Activated CD4-positive, alpha-beta memory T cell treated with anti-CD3 and anti-CD28 coated beads for 36 hours (primary cell): ENCODE measurements at regions of chrX and their contacts with region 1.

Region 1: GRCh38 chrX:13734278-13735172 is at the starts of genes OFD1 and TRAPPC2:
- DNase-seq: peak; percentile 93
- H3K4me3 Mint-ChIP-seq: peak within 1 kb of the TSS; percentile 92
- H3K27ac Mint-ChIP-seq: peak within 1 kb of the TSS; percentile 96
- H3K4me1 Mint-ChIP-seq: peaks cover 45% of the 10 kb centered on the region
- H3K27me3 Mint-ChIP-seq: no peaks in the 10 kb centered on the region
- total RNA-seq, gene OFD1: 24.5 to 30.9 TPM
- total RNA-seq, gene TRAPPC2: 14.1 to 16.1 TPM

Region 2: GRCh38 chrX:12955882-12956703 is 778.4 kb before region 1 on chrX:
- CTCF ChIA-PET with region 1: no interaction called
- POLR2A ChIA-PET with region 1: no interaction called
- intact Hi-C with region 1: loop called (anchors 5 kb)
- DNase-seq: peak; percentile 83
- H3K4me3 Mint-ChIP-seq: peak overlapping the region; percentile 85
- H3K27ac Mint-ChIP-seq: peak overlapping the region; percentile 99
- H3K4me1 Mint-ChIP-seq: peaks cover 64% of the 10 kb centered on the region
- H3K27me3 Mint-ChIP-seq: no peaks in the 10 kb centered on the region

Region 3: DNA sequence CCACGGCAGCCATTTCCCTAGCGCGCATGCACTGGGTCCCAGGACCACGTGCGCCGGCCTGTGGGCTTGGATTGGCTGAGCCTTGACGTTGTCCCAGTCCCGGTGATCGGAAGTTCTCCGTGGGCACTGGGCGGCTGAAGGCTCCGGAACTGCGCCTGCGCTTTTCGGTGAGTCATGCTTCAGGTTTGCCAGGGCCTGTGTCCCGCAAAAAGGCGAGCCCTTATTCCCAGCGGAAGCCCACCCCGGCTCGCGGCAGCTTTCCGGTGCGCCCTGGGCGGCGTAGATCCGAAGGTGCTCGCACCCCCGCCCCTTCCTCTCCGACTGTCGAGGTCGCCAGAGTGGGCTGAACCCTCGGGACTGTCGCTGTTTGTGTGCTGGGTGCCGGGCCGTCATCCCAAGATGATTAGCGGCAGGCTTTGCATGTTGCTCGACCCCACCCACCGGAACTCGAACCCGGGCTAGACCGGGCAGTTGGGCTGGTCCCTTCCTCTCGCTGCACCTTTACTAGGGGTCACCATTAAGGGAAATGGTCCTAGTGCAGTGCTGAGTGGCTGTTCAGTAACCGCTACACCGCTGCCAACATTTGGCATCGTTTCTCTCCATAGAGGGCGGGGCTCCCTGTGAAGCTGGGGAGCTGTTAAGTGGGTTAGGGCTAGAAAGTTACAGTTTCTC is 81.4 kb before region 1 on chrX and contains the start of gene TCEANC:
- CTCF ChIA-PET with region 1: interaction called, 3 read pairs
- POLR2A ChIA-PET with region 1: interaction called, 9 read pairs
- intact Hi-C with region 1: loop called (anchors 1 kb)
- DNase-seq: peak; percentile 96
- H3K4me3 Mint-ChIP-seq: peak within 1 kb of the TSS; percentile 84
- H3K27ac Mint-ChIP-seq: peak within 1 kb of the TSS; percentile 93
- H3K4me1 Mint-ChIP-seq: peaks cover 22% of the 10 kb centered on the region
- H3K27me3 Mint-ChIP-seq: no peaks in the 10 kb centered on the region
- total RNA-seq, gene TCEANC: 1.9 TPM

Region 4: DNA sequence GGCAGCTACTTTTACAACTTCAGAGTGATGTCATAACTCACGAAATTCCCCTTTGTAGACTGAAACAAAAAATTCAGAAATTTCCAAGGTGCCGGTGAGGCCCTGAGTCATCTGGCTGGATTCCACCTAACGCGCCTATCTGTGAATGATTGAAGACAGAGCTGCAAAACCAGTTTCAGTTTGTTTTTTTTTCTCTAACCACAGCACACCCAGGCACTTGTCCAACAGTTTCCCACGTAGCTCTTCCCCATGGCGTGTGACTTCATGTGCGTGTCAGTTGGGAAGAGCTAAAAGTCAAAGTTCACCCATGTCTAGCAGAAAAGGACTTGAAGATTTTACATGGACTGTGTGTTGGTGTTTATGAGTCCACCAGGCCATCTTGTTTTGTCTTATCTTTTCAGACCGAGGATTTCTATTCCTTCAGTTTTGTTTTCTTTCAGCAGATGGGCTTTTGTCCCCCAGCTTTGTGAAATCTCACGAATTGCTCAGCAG is 65.2 kb before region 1 on chrX:
- CTCF ChIA-PET with region 1: interaction called, 3 read pairs
- POLR2A ChIA-PET with region 1: interaction called, 18 read pairs
- intact Hi-C with region 1: loop called (anchors 1 kb)
- DNase-seq: peak; percentile 76
- H3K4me3 Mint-ChIP-seq: peak overlapping the region; percentile 70
- H3K27ac Mint-ChIP-seq: peak overlapping the region; percentile 95
- H3K4me1 Mint-ChIP-seq: peaks cover 24% of the 10 kb centered on the region
- H3K27me3 Mint-ChIP-seq: no peaks in the 10 kb centered on the region

Region 5: DNA sequence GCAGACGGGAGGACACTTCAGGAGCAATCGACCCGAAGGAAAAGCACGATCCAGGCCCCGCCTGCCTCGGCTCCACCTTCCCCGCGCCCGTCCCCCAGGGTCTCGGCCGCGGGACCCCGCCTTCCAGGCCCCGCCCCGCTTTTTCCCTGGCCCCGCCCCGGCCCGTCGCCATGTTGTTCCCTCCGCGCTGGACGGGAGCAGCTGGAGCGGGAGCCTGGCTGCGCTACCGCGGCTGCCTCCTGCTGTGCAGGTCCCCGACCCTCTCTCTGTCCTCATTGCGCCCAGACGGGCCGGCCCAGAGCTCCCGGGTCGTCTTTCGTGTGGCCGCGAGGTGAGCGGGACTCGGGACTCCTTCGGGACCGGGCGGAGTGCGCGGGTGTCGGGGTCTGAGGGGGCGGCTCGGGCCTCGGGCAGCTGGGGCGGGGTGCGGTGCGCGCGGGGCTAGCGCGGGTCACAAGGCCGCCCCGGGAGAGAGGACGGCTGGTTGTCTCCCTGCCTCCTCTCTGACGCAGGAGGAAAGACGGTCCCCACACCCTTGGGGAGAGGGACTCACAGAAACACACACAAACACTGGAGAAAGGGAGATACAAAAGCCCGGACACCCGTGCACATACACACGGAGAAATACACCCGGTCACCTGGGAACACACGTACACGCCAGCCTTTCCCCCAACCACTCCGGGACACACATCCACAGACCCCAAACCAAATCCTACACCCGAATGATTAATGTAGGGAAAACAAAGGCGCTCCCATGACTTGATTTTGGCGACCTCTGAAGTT is 45.4 kb before region 1 on chrX and contains the start of gene RAB9A:
- CTCF ChIA-PET with region 1: no interaction called
- POLR2A ChIA-PET with region 1: interaction called, 23 read pairs
- intact Hi-C with region 1: loop called (anchors 1 kb)
- DNase-seq: peak; percentile 88
- H3K4me3 Mint-ChIP-seq: peak within 1 kb of the TSS; percentile 87
- H3K27ac Mint-ChIP-seq: peak within 1 kb of the TSS; percentile 96
- H3K4me1 Mint-ChIP-seq: peaks cover 58% of the 10 kb centered on the region
- H3K27me3 Mint-ChIP-seq: no peaks in the 10 kb centered on the region
- total RNA-seq, gene RAB9A: 28.2 to 32.1 TPM

Region 6: GRCh38 chrX:13721819-13722519 is 12.6 kb before region 1 on chrX:
- CTCF ChIA-PET with region 1: interaction called, 4 read pairs
- POLR2A ChIA-PET with region 1: interaction called, 5 read pairs
- intact Hi-C with region 1: loop called (anchors 1 kb)
- DNase-seq: no peak
- H3K4me3 Mint-ChIP-seq: no peak overlapping the region
- H3K27ac Mint-ChIP-seq: no peak overlapping the region
- H3K4me1 Mint-ChIP-seq: peaks cover 57% of the 10 kb centered on the region
- H3K27me3 Mint-ChIP-seq: no peaks in the 10 kb centered on the region

Region 7: DNA sequence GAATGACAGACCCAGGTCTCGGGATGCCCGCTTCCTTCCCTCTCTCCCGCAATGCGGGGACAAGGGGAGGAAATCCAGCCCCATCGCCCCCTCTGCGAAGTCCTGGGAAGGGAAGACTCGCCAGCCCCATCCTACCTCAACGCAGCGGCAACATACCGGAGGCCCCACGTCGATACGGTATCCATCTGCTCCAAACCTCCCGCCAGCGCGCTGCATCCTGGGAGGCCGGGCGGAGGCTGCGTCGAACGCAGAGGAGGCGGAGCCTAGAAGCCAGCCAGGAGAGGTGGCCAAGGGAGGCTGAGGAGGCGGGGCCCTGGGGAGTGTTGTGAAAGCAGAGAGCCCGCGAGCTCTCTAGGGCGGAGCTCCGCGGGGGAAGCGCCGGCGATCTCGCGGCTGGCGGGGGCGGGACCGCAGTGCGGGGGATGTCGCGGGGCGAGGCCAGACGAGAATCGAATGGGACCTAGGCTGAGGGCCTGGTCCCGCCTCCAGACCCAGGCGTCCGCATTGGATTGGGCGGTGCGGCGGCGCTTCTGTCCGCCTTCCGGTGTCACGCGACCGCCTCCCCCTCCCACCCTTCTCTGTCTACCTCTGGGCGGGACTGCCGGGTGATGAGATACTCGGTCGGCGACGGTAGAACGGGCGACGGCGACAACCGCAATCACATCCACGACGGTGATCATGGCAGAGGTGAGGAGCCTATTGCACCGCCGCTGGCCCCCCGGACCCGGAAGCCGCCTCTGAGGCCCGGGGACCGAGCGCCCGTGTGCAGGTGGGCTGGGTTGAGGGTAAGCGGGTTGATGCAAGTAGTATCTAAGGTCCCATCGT is 1138.5 kb after region 1 on chrX and contains the starts of genes FANCB and MOSPD2:
- CTCF ChIA-PET with region 1: no interaction called
- POLR2A ChIA-PET with region 1: no interaction called
- intact Hi-C with region 1: loop called (anchors 10 kb)
- DNase-seq: peak; percentile 96
- H3K4me3 Mint-ChIP-seq: peak within 1 kb of the TSS; percentile 79
- H3K27ac Mint-ChIP-seq: peak within 1 kb of the TSS; percentile 80
- H3K4me1 Mint-ChIP-seq: peaks cover 15% of the 10 kb centered on the region
- H3K27me3 Mint-ChIP-seq: no peaks in the 10 kb centered on the region
- total RNA-seq, gene FANCB: 12.0 to 16.2 TPM
- total RNA-seq, gene MOSPD2: 12.6 to 13.7 TPM